ENCODE measurements at regions of chr6 and their contacts with region 1.

Region 1: GRCh38 chr6:88780714-88781389 is 182.6 kb downstream of the RNGTT start:
- DNase-seq: peak; percentile 60
- ATAC-seq: peak; percentile 86
- H3K4me3 ChIP-seq: no peak overlapping the region
- H3K27ac ChIP-seq: no peak overlapping the region
- H3K4me1 ChIP-seq: no peaks in the 10 kb centered on the region
- H3K27me3 ChIP-seq: no peaks in the 10 kb centered on the region
- CTCF ChIP-seq: peak; percentile 81
- EP300 ChIP-seq: no peak
- POLR2A ChIP-seq: no peak
- RAD21 ChIP-seq: peak; percentile 76

Region 2: DNA sequence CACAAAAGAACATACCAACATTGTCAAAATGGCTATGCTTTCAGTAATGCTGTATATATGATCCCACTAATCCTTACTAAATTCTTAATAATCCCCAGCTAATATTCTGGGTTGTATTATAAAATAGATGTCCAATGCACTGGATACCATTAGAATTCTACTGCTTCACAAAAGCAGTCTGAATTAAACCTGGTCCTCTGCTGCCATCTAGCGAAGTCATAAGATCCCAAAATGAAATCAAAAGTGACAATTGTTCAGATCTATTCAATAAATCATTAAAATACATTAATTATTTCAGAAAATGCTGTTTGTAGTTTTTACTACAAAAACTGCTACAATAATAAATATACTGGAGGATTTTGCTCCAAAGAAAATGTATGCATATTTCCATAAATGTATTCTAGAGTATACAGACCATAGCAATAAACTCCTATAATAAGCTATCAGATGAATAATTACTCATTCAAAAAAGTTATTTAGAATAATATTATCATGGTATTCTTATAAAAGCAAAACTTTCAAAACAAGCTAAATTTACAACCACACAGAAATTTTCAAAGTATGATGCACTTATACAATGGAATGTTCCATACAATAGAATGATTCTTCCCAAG is 90.0 kb after region 1 on chr6:
- CTCF ChIA-PET with region 1: interaction called, 4 read pairs
- POLR2A ChIA-PET with region 1: no interaction called
- in situ Hi-C with region 1: no loop called
- intact Hi-C with region 1: loop called (anchors 2 kb)
- DNase-seq: peak; percentile 50
- ATAC-seq: no peak
- H3K4me3 ChIP-seq: no peak overlapping the region
- H3K27ac ChIP-seq: no peak overlapping the region
- H3K4me1 ChIP-seq: peaks cover 23% of the 10 kb centered on the region
- H3K27me3 ChIP-seq: no peaks in the 10 kb centered on the region
- CTCF ChIP-seq: peak; percentile 65
- EP300 ChIP-seq: no peak
- POLR2A ChIP-seq: no peak
- RAD21 ChIP-seq: peak; percentile 19; the same call in 1 of the 2 replicates

Measured in HepG2 (cell line).